CD4-positive, alpha-beta memory T cell (primary cell): ENCODE measurements at regions of chr1 and their contacts with region 1.

Region 1: DNA sequence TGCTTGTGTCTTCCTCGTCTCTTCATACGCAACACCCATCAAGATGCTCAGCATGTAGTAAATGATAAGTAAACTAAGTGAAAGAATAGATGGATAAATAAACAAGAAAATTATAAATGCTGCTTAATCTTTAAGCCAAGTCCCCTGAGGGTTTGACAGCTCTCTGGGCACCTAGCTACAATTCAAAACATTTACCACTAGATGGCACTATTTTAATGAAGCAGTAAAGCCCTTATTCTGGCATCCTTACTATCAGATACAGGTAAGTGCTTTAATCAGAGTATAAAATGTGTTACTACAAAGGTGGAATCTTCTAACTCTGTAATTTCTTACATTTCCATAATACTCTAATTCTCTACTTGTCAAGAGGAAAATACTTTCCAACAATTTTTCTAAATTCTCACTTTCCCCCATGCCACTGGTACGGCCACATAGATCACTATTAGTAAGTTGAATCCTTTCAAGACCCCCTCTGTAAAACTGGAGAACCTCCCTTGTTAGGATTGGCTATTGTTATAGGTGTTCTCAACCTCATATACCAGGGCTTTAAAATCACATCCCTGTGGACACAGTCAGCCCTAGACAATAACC is 137.8 kb downstream of the BARHL2 start:
- DNase-seq: peak in 4 of 5 donors; percentile 35 to 41 (median 38)
- H3K4me3 ChIP-seq: no peak overlapping the region
- H3K4me3 Mint-ChIP-seq: no peak overlapping the region
- H3K27ac ChIP-seq: no peak overlapping the region
- H3K27ac Mint-ChIP-seq: no peak overlapping the region
- H3K4me1 ChIP-seq: no peaks in the 10 kb centered on the region
- H3K4me1 Mint-ChIP-seq: no peaks in the 10 kb centered on the region
- H3K27me3 ChIP-seq: no peaks in the 10 kb centered on the region
- H3K27me3 Mint-ChIP-seq: peaks cover 1 to 8% of the 10 kb centered on the region in 2 donors

Region 2: DNA sequence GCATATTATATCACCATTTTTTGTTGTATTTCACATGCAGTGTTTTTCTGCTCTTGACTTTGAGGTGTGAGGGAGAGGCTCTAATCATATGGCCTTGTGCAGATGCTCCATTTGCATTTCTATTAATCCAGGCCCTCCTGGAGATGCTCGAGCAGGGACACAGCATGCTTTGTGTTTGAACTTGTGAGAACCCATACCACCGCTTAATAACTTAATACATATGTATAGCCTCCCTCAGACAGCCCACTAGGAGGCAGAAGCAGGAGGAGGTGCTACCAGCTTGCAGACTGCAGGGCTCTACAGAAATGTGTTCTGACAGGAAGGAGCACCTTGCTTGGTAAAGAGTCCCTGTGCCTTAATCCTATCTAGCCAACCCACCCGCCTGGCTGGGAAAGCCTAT is 17.4 kb before region 1 on chr1:
- CTCF ChIA-PET with region 1: interaction called, 15 read pairs
- POLR2A ChIA-PET with region 1: no interaction called
- intact Hi-C with region 1: no loop called
- DNase-seq: no peak
- H3K4me3 ChIP-seq: no peak overlapping the region
- H3K4me3 Mint-ChIP-seq: no peak overlapping the region
- H3K27ac ChIP-seq: no peak overlapping the region
- H3K27ac Mint-ChIP-seq: no peak overlapping the region
- H3K4me1 ChIP-seq: no peaks in the 10 kb centered on the region
- H3K4me1 Mint-ChIP-seq: no peaks in the 10 kb centered on the region
- H3K27me3 ChIP-seq: no peaks in the 10 kb centered on the region
- H3K27me3 Mint-ChIP-seq: peaks cover 1 to 10% of the 10 kb centered on the region in 2 donors

Region 3: GRCh38 chr1:90568436-90568835 is 10.9 kb before region 1 on chr1:
- CTCF ChIA-PET with region 1: interaction called, 15 read pairs
- POLR2A ChIA-PET with region 1: no interaction called
- intact Hi-C with region 1: no loop called
- DNase-seq: no peak
- H3K4me3 ChIP-seq: no peak overlapping the region
- H3K4me3 Mint-ChIP-seq: no peak overlapping the region
- H3K27ac ChIP-seq: no peak overlapping the region
- H3K27ac Mint-ChIP-seq: no peak overlapping the region
- H3K4me1 ChIP-seq: no peaks in the 10 kb centered on the region
- H3K4me1 Mint-ChIP-seq: no peaks in the 10 kb centered on the region
- H3K27me3 ChIP-seq: no peaks in the 10 kb centered on the region
- H3K27me3 Mint-ChIP-seq: peaks cover 1 to 9% of the 10 kb centered on the region in 2 donors